ENCODE measurements at regions of chr4 and their contacts with region 1.

Region 1: GRCh38 chr4:53377319-53378170 is at the start of gene FIP1L1:
- DNase-seq: peak; percentile 86 to 93 (median 91)
- H3K4me3 ChIP-seq: peak within 1 kb of the TSS; percentile 67 to 86 (median 83)
- H3K4me3 Mint-ChIP-seq: peak within 1 kb of the TSS; percentile 99
- H3K27ac ChIP-seq: peak within 1 kb of the TSS; percentile 82 to 89
- H3K27ac Mint-ChIP-seq: peak within 1 kb of the TSS; percentile 96 to 99 (median 96)
- H3K4me1 ChIP-seq: peaks cover 16 to 23% of the 10 kb centered on the region in 2 donors
- H3K4me1 Mint-ChIP-seq: peaks cover 28% of the 10 kb centered on the region
- H3K27me3 ChIP-seq: no peaks in the 10 kb centered on the region
- H3K27me3 Mint-ChIP-seq: peaks cover 0 to 2% (median 1%) of the 10 kb centered on the region in 3 donors
- CTCF ChIP-seq: no peak
- polyA plus RNA-seq, gene FIP1L1: 14.5 to 36.9 (median 25.4) TPM

Region 2: DNA sequence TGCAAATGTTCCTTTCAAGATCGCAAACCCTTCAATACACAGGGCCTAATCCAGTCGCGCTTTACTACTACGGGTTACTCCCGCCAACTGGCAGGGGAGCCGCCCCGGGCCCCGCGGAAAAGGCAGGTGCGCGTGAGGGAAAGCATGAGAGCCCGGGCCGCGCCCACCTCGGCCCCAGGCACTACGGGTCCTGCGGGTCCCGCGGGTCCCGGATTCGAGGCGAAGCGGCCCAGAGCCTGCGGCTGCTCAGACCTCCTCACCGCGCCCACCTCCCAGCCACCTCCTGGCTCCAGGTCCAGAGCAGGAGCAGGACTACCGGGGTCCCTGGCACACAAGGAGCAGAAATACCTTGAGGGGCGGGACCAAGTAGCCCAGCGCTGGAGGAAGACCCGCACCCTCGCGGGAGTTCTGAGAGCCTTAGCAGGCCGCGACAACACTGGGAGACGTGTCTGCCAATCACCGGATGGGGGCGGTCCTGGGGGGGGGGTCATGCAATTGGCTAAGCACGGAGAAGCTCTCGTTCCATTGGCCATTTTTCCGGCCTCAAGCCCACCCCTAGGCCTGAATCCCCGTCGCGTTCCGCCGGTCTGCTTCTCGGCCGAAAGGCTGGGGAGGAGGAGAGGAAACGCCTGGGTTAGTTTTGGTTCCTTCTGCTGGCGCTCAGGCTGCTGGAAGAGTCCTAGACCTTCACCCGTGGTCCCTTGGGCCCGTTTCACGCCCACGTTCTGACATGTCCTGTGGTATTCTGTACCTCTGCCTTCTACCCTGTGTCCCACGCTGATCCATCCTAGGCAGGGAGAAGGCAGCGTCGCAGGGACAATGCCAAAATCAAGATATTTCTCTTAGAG is 655.4 kb before region 1 on chr4:
- intact Hi-C with region 1: no loop called
- DNase-seq: peak; percentile 92 to 94 (median 92)
- H3K4me3 ChIP-seq: peak overlapping the region; percentile 65 to 82 (median 74)
- H3K4me3 Mint-ChIP-seq: peak overlapping the region; percentile 79 to 88
- H3K27ac ChIP-seq: peak overlapping the region; percentile 71 to 82
- H3K27ac Mint-ChIP-seq: peak overlapping the region; percentile 68 to 92 (median 88)
- H3K4me1 ChIP-seq: peaks cover 13 to 15% of the 10 kb centered on the region in 2 donors
- H3K4me1 Mint-ChIP-seq: peaks cover 12% of the 10 kb centered on the region
- H3K27me3 ChIP-seq: no peaks in the 10 kb centered on the region
- H3K27me3 Mint-ChIP-seq: peaks cover 1 to 5% (median 5%) of the 10 kb centered on the region in 3 donors
- CTCF ChIP-seq: no peak

Region 3: DNA sequence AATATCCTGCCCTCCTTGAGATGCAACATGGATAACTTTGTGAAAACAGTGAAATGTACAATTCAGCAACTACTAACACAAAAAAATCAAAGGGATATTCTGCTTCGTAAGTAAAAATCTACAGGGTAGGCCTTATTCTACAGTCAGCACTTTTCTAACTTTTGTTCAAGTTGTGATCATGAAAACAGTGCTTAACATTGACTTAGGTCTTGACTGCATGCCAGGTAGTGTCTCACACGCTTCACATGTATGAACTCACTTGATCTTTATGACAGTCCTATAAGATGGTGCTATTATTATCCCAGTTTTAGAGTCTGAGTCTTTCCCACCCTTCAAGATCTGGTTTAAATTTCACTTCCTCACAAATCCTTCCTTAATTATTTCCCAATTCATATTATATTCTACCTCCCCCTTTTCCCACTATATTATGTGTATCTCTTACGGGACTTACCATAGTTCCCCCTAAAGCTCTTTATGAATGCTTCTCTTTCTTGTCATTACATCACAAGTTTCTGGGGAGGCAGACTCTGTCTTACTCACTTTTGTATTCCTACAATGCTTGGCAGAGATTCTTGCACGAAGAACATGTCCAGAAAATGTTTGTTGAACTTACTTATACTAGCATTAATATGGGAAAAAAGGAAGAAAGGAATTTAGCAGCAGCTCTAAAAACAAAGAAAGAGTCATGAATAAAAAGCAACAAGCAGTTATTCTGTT is 191.5 kb before region 1 on chr4:
- intact Hi-C with region 1: no loop called
- DNase-seq: no peak
- H3K4me3 ChIP-seq: no peak overlapping the region
- H3K4me3 Mint-ChIP-seq: no peak overlapping the region
- H3K27ac ChIP-seq: no peak overlapping the region
- H3K27ac Mint-ChIP-seq: no peak overlapping the region
- H3K4me1 ChIP-seq: no peaks in the 10 kb centered on the region
- H3K4me1 Mint-ChIP-seq: no peaks in the 10 kb centered on the region
- H3K27me3 ChIP-seq: no peaks in the 10 kb centered on the region
- H3K27me3 Mint-ChIP-seq: no peaks in the 10 kb centered on the region
- CTCF ChIP-seq: no peak

Region 4: DNA sequence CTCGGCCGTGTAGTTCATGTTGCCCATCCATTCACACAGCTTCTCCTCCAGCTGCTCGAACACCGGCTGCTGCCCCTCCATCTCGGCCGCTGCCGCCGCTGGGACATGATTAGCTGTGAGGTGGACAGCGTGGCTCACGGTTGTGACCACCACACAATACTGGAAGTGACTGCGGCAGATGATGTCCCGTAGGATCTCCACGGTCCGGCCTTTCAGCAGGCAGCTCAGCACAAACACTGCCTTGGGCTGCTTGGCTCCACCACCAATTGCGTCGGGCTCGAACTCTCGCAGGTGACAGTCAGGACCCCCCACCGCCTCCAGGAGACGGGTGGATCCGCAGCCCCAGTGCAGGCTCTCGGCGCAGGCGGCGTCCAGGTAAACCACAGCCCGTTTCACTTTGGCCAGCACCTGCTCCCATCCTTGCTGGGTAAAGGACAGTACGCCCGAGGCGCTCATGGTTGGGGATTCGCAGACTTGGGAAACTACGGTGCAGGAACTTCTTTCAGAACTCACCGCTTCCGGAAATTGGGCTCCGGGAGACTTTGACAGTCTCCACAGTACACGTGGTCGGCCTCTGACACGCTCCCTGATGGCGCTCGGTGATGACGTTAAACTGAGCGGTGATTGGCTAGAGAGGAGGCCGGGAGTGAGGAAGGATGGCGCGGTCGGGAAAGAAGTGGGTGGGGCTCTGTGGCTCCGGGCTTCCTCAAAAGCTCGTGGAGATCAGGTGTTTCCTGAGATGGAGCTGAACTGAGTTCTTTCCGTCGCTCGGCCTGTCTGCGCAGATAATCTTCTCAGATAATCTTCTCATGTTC is 11.9 kb before region 1 on chr4 and contains the start of gene SCFD2:
- intact Hi-C with region 1: loop called in 1 of 2 experiments (anchors 1 kb)
- DNase-seq: peak; percentile 97 to 99 (median 97)
- H3K4me3 ChIP-seq: peak within 1 kb of the TSS; percentile 59 to 99 (median 84)
- H3K4me3 Mint-ChIP-seq: peak within 1 kb of the TSS; percentile 90 to 97
- H3K27ac ChIP-seq: peak within 1 kb of the TSS; percentile 42 to 90
- H3K27ac Mint-ChIP-seq: peak within 1 kb of the TSS; percentile 90 to 95 (median 93)
- H3K4me1 ChIP-seq: peaks cover 18 to 23% of the 10 kb centered on the region in 2 donors
- H3K4me1 Mint-ChIP-seq: peaks cover 41% of the 10 kb centered on the region
- H3K27me3 ChIP-seq: no peaks in the 10 kb centered on the region
- H3K27me3 Mint-ChIP-seq: peaks cover 4 to 13% (median 6%) of the 10 kb centered on the region in 3 donors
- CTCF ChIP-seq: no peak
- polyA plus RNA-seq, gene SCFD2: 5.4 to 9.4 (median 6.7) TPM

Region 5: GRCh38 chr4:54064295-54065111 is 687.0 kb after region 1 on chr4 and contains the start of gene CHIC2:
- intact Hi-C with region 1: loop called in 1 of 2 experiments (anchors 10 kb)
- DNase-seq: peak; percentile 92 to 96 (median 92)
- H3K4me3 ChIP-seq: peak within 1 kb of the TSS; percentile 94 to 97 (median 97)
- H3K4me3 Mint-ChIP-seq: peak within 1 kb of the TSS; percentile 91 to 96
- H3K27ac ChIP-seq: peak within 1 kb of the TSS; percentile 99
- H3K27ac Mint-ChIP-seq: peak within 1 kb of the TSS; percentile 96 to 99 (median 98)
- H3K4me1 ChIP-seq: peaks cover 16 to 34% of the 10 kb centered on the region in 2 donors
- H3K4me1 Mint-ChIP-seq: peaks cover 39% of the 10 kb centered on the region
- H3K27me3 ChIP-seq: no peaks in the 10 kb centered on the region
- H3K27me3 Mint-ChIP-seq: peaks cover 0 to 3% (median 1%) of the 10 kb centered on the region in 3 donors
- CTCF ChIP-seq: no peak
- polyA plus RNA-seq, gene CHIC2: 23.1 to 83.3 (median 73.4) TPM

Measured in CD14-positive monocyte (primary cell).